Psoas muscle (tissue), 8 donors: ENCODE measurements at regions of chr15 and their contacts with region 1.

Region 1: GRCh38 chr15:64046347-64047153 is at the start of gene DAPK2:
- DNase-seq: peak; percentile 79 to 87
- ATAC-seq: peak; percentile 88 to 94 (median 92)
- H3K4me3 ChIP-seq: peak within 1 kb of the TSS; percentile 87
- H3K27ac ChIP-seq: peak within 1 kb of the TSS; percentile 73
- H3K4me1 ChIP-seq: peaks cover 34% of the 10 kb centered on the region
- H3K27me3 ChIP-seq: no peaks in the 10 kb centered on the region
- CTCF ChIP-seq: peak; percentile 88
- total RNA-seq, gene DAPK2: 44.3 to 65.6 (median 54.6) TPM

Region 2: DNA sequence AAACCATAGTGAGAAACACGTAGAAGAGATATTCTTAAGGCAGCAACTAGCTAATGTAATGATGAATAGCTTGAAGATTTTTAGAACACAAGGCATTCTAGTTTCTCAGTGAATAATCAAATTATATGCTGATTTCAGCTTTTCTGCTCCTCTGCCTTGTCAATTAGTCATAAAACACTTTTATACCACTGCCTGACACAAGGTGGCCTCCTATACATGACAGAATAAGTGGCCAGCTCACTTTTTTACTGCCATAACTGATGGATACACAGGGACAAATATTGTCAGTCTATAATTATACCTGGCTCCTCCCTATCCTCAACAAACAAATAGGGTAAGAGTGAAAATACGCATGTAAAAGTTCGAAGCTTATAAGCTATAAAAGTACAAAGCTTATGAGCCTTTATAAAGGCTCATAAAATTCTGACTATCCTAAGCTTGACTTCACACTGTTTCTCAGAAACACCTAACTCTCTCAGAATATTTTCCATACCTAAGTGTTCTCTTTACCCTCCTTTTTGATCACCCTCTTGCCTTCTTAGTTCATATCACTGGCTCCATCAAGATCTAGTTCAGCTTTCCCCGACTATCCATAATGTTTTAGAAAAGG is 294.4 kb before region 1 on chr15:
- intact Hi-C with region 1: loop called (anchors 5 kb)
- DNase-seq: no peak
- ATAC-seq: peak; percentile 78 to 93 (median 90)
- H3K4me3 ChIP-seq: no peak overlapping the region
- H3K27ac ChIP-seq: peak overlapping the region; percentile 28
- H3K4me1 ChIP-seq: no peaks in the 10 kb centered on the region
- H3K27me3 ChIP-seq: no peaks in the 10 kb centered on the region
- CTCF ChIP-seq: peak; percentile 81

Region 3: GRCh38 chr15:63833021-63833696 is 213.4 kb before region 1 on chr15:
- intact Hi-C with region 1: loop called in 1 of 2 experiments (anchors 5 kb)
- DNase-seq: peak; percentile 50 to 70
- ATAC-seq: peak; percentile 66 to 75 (median 68)
- H3K4me3 ChIP-seq: peak overlapping the region; percentile 93
- H3K27ac ChIP-seq: peak overlapping the region; percentile 95
- H3K4me1 ChIP-seq: peaks cover 29% of the 10 kb centered on the region
- H3K27me3 ChIP-seq: no peaks in the 10 kb centered on the region
- CTCF ChIP-seq: no peak

Region 4: DNA sequence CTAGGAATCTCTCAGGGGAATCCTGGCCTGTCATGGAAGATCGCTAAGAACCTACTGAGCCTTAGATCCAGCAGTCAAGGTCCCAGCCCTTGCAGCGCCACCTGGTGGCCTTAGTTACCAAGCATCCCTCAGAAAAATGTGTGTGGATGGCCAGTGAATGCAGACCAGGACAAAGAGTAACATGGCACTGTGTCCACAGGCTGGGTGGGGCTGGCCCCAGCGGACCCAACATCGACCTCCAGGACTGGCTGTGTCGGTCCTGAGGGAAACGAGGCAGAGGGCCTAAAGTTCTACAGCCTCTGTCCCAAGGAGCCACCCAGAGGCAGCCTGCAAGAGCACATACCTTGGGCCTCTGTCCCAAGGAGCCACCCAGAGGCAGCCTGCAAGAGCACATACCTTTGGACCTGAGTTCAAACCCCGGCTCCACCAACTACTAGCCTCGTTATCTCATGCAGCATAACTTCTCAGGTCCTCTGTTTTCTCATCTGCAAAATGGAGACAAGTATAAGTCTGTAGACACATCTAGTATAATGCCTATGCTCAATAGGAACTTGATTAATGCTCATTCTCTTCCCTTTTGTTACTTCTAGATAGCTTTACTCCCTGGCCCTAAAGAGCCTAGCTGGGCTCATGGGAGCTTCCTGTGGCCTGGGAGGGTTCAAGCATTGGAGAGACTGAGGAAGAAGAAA is 155.3 kb before region 1 on chr15:
- intact Hi-C with region 1: loop called in 1 of 2 experiments (anchors 5 kb)
- DNase-seq: peak; percentile 79 to 86
- ATAC-seq: peak in 3 of 4 donors; percentile 42 to 59 (median 48)
- H3K4me3 ChIP-seq: no peak overlapping the region
- H3K27ac ChIP-seq: no peak overlapping the region
- H3K4me1 ChIP-seq: peaks cover 55% of the 10 kb centered on the region
- H3K27me3 ChIP-seq: no peaks in the 10 kb centered on the region
- CTCF ChIP-seq: peak; percentile 81

Region 5: DNA sequence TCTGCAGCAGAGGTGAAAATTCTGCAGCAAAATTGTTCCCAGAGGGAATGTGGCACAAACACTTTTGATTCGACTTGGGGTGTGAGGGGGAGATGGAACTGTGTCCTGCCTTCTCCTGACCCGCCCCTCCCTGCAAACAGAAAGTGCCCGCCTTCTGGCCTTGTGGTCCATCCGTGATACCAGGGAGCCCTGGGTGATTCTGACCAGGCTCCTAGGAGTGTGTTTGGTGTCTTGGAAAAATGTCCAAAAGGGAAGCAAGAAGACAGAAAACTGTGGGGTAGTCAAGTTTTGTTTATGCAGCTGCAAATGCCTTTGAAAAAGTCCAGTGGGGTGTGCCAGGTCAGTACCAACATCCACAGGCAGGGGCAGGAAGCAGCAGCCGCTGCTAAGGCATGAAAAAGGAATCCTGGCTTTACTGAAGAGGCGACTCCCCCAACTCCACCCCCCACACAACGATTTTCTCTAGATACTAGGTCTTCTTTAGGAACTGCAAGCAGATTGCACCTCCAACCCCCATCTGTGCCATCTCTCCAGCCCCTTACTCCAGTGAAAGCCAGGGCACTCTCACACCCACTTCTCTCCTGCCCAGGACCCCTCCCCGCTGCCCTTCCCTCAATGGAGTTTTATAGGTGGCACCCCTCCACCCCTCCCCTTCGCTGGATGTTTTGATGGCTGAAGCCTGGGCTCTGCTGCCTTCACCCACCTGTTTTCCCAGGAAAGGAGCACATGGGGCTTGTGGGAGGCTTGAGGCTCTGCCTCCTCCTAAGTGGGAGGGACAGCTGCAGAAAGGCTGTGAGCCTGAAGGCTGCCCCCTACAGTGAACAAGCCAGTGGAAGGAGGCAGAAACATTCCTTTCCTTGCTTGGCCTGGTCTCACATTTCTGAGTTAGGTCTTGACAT is 130.4 kb before region 1 on chr15:
- intact Hi-C with region 1: loop called in 1 of 2 experiments (anchors 10 kb)
- DNase-seq: peak in 1 of 2 donors; percentile 51
- ATAC-seq: peak; percentile 29 to 60 (median 56)
- H3K4me3 ChIP-seq: no peak overlapping the region
- H3K27ac ChIP-seq: peak overlapping the region; percentile 75
- H3K4me1 ChIP-seq: peaks cover 23% of the 10 kb centered on the region
- H3K27me3 ChIP-seq: no peaks in the 10 kb centered on the region
- CTCF ChIP-seq: peak; percentile 27

Region 6: GRCh38 chr15:63939531-63940130 is 106.9 kb before region 1 on chr15:
- intact Hi-C with region 1: loop called in 1 of 2 experiments (anchors 5 kb)
- DNase-seq: peak; percentile 55 to 76
- ATAC-seq: peak; percentile 80 to 88 (median 84)
- H3K4me3 ChIP-seq: no peak overlapping the region
- H3K27ac ChIP-seq: peak overlapping the region; percentile 73
- H3K4me1 ChIP-seq: peaks cover 32% of the 10 kb centered on the region
- H3K27me3 ChIP-seq: no peaks in the 10 kb centered on the region
- CTCF ChIP-seq: no peak

Region 7: DNA sequence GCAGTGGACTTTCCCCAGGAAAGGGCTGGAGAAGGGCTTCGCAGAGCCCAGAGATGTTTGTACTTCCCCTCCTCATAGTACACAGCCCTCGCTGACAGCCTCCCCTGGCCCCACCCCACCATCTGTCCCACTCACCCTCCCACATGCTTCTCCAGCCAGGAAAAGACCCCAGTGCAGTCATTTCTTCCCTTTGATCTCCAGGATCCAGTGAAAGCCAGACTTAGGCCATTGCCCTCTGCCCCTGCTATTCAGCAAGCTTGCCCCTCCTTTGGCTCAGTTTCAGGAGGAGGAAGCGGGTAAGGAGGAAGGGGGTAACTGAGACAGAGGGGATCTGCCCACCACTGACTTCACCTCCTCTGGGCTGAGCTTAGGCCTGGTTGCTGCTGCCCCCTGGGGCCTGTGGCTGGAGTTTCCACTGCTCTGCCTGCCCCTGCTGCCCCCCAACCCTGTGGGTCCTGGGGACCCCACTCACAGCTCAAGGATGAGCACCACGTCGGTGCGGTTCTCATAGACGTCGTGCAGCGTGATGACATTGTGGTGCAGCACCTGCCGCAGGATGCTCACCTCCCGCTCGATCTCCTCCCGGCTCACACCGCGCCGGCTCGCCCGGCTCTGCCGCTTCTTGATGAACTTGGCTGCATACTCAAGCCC is 63.4 kb before region 1 on chr15:
- intact Hi-C with region 1: loop called in 1 of 2 experiments (anchors 5 kb)
- DNase-seq: no peak
- ATAC-seq: no peak
- H3K4me3 ChIP-seq: no peak overlapping the region
- H3K27ac ChIP-seq: peak overlapping the region; percentile 79
- H3K4me1 ChIP-seq: peaks cover 81% of the 10 kb centered on the region
- H3K27me3 ChIP-seq: no peaks in the 10 kb centered on the region
- CTCF ChIP-seq: peak; percentile 11

Region 8: DNA sequence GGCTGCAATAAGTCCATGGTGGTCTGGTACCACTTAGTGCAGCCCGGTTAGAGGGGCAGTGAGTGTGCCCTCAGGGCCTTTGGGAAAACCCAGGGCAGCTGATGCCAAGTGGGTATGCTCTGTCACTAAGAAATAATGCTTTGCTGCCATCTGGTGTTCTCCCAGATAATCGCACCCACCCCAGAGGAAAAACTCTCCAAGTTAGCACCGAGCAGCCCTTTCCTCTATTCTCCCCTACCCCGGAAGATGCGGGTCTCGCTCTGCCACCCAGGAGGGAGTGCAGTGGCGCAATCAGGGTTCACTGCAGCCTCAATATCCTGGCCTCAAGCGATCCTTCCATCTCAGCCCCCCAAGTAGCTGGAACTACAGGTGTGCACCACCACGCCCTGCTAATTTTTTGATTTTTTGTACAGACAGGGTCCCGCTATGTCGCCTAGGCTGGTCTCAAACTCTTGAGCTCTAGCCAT is 21.0 kb after region 1 on chr15:
- intact Hi-C with region 1: no loop called
- DNase-seq: peak; percentile 46 to 68
- ATAC-seq: peak; percentile 55 to 65 (median 56)
- H3K4me3 ChIP-seq: peak overlapping the region; percentile 15
- H3K27ac ChIP-seq: no peak overlapping the region
- H3K4me1 ChIP-seq: peaks cover 29% of the 10 kb centered on the region
- H3K27me3 ChIP-seq: no peaks in the 10 kb centered on the region
- CTCF ChIP-seq: peak; percentile 82